AG04450 (cell line): ENCODE measurements at regions of chr1 and their contacts with region 1.

Region 1: GRCh38 chr1:167687919-167688519 is 33.8 kb upstream of the MPZL1 start:
- DNase-seq: peak; percentile 68
- H3K4me3 ChIP-seq: no peak overlapping the region
- H3K27ac ChIP-seq: no peak overlapping the region
- H3K27me3 ChIP-seq: peaks cover 13% of the 10 kb centered on the region
- CTCF ChIP-seq: peak; percentile 95

Region 2: DNA sequence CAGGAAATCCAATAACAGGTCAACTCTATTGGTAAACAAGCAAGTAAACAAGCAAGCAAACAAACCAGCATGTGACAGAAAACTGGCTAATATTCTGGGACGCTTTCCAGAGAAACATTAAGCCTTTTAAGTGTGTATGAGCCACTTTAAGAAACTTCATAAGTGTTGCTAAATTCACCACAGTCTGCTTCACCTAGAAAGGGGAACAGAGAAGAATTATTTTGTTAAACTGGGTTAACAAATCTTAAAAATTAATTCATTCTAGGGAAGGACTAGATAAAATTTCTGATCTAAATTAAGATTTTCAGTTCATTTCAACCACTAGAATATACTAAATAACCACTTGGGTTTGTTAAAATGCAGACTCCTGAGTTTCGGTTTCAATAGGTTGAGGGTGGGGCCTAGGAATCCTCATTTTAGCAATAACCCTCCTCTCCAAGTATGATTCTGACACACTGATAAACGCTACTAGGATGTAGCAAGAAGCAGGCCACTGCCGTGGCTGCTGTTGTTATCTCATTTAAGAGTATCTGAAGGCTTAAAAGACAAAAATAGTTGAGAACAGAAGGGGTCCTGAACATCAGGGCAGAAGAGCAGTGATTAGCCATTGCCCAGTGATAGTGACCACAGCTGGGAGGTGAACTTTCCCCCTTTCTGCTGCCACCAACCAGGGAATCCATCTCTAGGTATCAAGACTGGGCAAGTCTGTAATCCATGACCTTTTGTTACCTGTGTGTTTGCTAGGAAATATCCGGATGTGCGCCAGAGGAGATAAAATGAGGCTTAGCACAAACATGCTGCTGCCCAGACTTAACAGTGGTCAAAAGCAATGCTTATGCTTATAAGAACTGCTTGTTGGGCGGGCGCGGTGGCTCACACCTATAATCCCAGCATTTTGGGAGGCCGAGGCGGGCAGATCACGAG is 145.6 kb before region 1 on chr1:
- CTCF ChIA-PET with region 1: interaction called, 13 read pairs
- POLR2A ChIA-PET with region 1: no interaction called
- DNase-seq: no peak
- H3K4me3 ChIP-seq: no peak overlapping the region
- H3K27ac ChIP-seq: no peak overlapping the region
- H3K27me3 ChIP-seq: no peaks in the 10 kb centered on the region
- CTCF ChIP-seq: no peak

Region 3: GRCh38 chr1:167563579-167564246 is 124.3 kb before region 1 on chr1:
- CTCF ChIA-PET with region 1: interaction called, 34 read pairs
- POLR2A ChIA-PET with region 1: no interaction called
- DNase-seq: no peak
- H3K4me3 ChIP-seq: no peak overlapping the region
- H3K27ac ChIP-seq: no peak overlapping the region
- H3K27me3 ChIP-seq: peaks cover 2% of the 10 kb centered on the region
- CTCF ChIP-seq: no peak

Region 4: GRCh38 chr1:167617153-167618147 is 70.6 kb before region 1 on chr1:
- CTCF ChIA-PET with region 1: interaction called, 20 read pairs
- POLR2A ChIA-PET with region 1: no interaction called
- DNase-seq: no peak
- H3K4me3 ChIP-seq: no peak overlapping the region
- H3K27ac ChIP-seq: no peak overlapping the region
- H3K27me3 ChIP-seq: peaks cover 2% of the 10 kb centered on the region
- CTCF ChIP-seq: no peak

Region 5: DNA sequence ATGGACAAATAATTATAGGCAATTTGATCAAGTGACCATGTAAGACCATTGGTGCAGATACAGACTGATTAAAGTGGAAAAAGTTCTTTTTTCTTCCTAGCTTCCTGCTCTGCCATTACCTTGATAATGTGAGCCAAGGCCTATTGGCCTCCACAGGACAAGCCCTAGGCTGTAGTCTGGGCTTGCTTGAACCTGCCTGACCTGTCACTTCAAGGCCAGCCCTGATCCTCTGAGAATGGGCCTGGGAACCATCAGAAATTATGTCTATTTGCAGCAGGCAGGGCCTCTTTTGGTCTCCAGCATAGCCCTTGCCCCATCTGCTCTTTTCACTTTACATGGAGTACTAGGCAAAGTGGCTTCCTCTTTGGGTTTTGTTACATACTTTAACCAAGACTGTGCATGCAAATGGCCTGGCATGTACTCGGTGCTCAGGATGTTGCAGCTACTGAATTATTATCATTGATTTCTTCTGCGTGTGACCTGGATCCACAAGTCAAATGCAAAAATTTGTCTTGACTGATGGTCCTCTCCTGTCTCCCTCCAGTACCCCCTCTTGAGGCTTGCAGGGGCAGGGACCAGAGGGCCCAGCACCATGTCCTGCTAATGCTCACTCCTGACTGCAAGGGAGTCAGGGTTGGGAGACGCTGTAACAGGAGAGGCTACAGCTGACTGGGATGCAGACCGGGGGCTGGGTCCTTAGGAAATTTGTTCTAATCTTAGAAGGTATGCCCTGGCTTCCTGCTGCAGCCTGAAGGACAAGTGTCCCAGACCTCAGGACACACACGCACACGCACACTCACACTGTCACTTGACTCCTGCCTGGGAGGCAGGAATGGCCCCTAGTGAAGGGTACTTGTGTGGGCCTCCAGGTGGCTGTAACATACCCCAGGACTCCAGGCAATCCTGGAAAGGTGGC is 18.6 kb before region 1 on chr1:
- CTCF ChIA-PET with region 1: interaction called, 20 read pairs
- POLR2A ChIA-PET with region 1: no interaction called
- DNase-seq: no peak
- H3K4me3 ChIP-seq: no peak overlapping the region
- H3K27ac ChIP-seq: no peak overlapping the region
- H3K27me3 ChIP-seq: peaks cover 13% of the 10 kb centered on the region
- CTCF ChIP-seq: no peak

Region 6: GRCh38 chr1:167705250-167705649 is 17.2 kb after region 1 on chr1:
- CTCF ChIA-PET with region 1: interaction called, 10 read pairs
- POLR2A ChIA-PET with region 1: no interaction called
- DNase-seq: no peak
- H3K4me3 ChIP-seq: no peak overlapping the region
- H3K27ac ChIP-seq: no peak overlapping the region
- H3K27me3 ChIP-seq: peaks cover 28% of the 10 kb centered on the region
- CTCF ChIP-seq: no peak

Region 7: DNA sequence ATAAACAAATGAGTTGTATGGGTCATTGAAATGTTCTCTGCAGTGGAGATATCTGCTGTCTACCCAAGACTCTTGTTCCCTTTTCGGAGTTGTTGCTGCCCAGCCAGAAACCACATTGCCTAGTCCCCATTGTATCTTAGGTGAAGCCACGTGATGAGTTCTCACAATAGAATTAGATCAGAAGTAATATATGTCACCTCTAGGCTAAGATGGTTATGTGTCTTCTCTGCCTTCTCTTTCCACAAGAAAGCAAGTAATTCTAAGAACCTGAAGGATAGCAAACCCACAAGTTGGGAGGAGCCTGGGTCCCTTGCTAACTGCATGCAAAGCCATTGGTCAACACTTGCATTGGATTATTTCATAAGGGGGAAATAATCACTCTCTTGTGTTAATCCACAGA is 149.3 kb after region 1 on chr1:
- CTCF ChIA-PET with region 1: no interaction called
- POLR2A ChIA-PET with region 1: no interaction called
- DNase-seq: no peak
- H3K4me3 ChIP-seq: no peak overlapping the region
- H3K27ac ChIP-seq: no peak overlapping the region
- H3K27me3 ChIP-seq: no peaks in the 10 kb centered on the region
- CTCF ChIP-seq: no peak

Region 8: DNA sequence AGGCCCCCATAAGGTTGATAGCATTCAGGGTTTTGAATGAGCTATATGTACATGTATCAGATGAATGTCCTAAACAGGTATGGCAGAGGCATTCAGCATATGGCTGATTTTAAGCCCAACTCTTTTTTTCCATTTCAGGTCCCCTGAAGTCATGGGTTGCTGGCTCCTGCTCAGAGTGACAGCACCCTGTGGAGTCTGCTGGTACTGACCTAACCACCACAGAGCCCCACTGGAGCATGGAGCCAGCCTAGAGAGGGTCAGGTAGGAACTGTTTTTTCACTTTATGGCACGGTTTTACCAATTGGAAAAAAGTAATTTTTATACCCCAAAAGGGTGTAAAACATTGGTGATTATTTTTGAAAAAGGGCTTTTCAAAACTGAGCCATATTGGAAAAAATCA is 331.4 kb after region 1 on chr1:
- CTCF ChIA-PET with region 1: no interaction called
- POLR2A ChIA-PET with region 1: no interaction called
- DNase-seq: no peak
- H3K4me3 ChIP-seq: no peak overlapping the region
- H3K27ac ChIP-seq: no peak overlapping the region
- H3K27me3 ChIP-seq: no peaks in the 10 kb centered on the region
- CTCF ChIP-seq: no peak